ENCODE measurements at regions of chr10 and their contacts with region 1.

Region 1: DNA sequence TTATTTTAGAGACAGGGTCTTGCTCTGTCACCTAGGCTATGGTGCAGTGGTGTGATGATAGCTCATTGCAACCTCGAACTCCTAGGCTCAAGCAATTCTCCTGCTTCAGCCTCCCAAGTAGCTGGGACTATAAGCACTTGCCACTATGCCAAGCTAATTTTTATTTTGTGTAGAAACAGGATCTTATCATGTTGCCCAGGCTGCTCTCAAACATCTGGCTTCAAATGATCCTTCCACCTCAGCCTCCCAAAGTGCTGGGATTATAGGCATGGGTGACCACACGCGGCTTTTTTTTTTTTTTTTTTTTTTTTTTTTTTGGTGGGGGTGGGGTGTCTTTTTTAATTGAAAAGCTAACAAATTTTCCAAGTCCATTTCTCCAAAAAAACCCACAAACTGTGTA is 18.4 kb downstream of the HPS6 start:
- DNase-seq: no peak
- H3K4me3 ChIP-seq: no peak overlapping the region
- H3K27ac ChIP-seq: no peak overlapping the region
- H3K4me1 ChIP-seq: no peaks in the 10 kb centered on the region
- H3K27me3 ChIP-seq: no peaks in the 10 kb centered on the region
- CTCF ChIP-seq: no peak

Region 2: DNA sequence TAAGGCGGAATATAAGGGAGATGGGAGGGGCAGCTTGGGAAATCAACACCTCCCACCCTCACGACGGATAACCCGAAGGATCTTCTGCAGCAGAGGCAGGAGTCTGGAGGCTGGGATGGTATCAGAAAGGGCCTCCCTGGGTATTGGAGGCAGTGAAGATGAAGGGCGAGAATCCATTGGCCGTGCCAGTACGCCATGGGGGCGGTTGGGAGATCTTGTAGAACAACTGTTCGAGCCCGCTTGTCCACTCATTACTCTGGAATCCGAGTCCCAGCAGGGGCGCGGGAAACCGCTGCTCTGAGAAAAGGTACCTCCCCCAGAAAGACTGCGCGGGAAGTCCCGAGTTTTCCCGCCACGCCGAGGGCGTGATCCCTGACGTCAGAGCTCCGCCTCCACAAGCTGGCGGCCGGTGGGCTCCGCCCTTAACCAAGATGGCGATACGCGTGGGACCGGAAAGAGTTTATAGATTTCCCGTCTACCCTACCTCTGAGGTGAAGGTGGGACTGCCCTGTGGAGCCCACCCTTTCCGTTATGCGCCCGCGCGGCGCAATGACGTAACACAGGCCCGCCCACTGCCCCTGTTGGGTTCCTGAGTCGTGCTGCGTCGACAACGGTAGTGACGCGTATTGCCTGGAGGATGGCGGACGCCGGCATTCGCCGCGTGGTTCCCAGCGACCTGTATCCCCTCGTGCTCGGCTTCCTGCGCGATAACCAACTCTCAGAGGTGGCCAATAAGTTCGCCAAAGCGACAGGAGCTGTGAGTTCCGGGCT is 68.4 kb after region 1 on chr10 and contains the start of gene NOLC1:
- CTCF ChIA-PET with region 1: no interaction called
- dilution Hi-C with region 1: loop called (anchors 5 kb)
- in situ Hi-C with region 1: no loop called
- intact Hi-C with region 1: no loop called
- DNase-seq: peak; percentile 99
- H3K4me3 ChIP-seq: peak within 1 kb of the TSS; percentile 82 to 96 (median 89)
- H3K27ac ChIP-seq: peak within 1 kb of the TSS; percentile 95
- H3K4me1 ChIP-seq: peaks cover 13% of the 10 kb centered on the region
- H3K27me3 ChIP-seq: no peaks in the 10 kb centered on the region
- CTCF ChIP-seq: no peak
- total RNA-seq, gene NOLC1: 51.2 to 116 TPM

Region 3: DNA sequence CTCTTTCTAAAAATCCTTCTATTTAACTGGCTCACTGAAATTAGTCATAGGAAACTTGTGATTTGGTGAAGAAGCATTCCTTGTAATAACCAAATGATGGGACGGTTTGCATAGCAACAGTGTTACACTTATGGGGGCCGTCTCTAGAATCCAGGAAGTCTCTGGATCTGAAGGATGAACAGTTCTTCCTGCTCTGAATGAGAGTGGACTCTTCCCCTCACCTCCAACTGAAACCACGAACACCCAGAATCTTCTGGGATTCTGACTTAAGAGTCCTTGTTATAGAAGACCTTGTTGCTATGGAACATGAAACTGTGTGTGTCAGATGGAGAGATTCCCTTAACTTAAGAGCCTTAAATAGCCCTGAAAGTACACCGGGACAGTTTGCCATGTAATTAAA is 91.9 kb after region 1 on chr10:
- CTCF ChIA-PET with region 1: no interaction called
- dilution Hi-C with region 1: no loop called
- in situ Hi-C with region 1: no loop called
- intact Hi-C with region 1: no loop called
- DNase-seq: peak; percentile 4
- H3K4me3 ChIP-seq: no peak overlapping the region
- H3K27ac ChIP-seq: no peak overlapping the region
- H3K4me1 ChIP-seq: no peaks in the 10 kb centered on the region
- H3K27me3 ChIP-seq: no peaks in the 10 kb centered on the region
- CTCF ChIP-seq: no peak

Measured in mammary epithelial cell (primary cell).